Prostate gland (tissue), 2 donors: ENCODE measurements at regions of chr11 and their contacts with region 1.

Region 1: GRCh38 chr11:44565211-44565952 is at the start of gene CD82:
- DNase-seq: peak; percentile 100
- H3K4me3 ChIP-seq: peak within 1 kb of the TSS; percentile 51 to 56
- H3K27ac ChIP-seq: peak within 1 kb of the TSS; percentile 96 to 99
- H3K4me1 ChIP-seq: peaks cover 8% of the 10 kb centered on the region
- H3K27me3 ChIP-seq: no peaks in the 10 kb centered on the region
- CTCF ChIP-seq: peak in 3 of 4 experiments; percentile 17 to 52 (median 45)
- POLR2A ChIP-seq: peak; percentile 97
- total RNA-seq, gene CD82: 35.1 to 54.6 TPM

Region 2: GRCh38 chr11:44592125-44592940 is 27.0 kb after region 1 on chr11:
- intact Hi-C with region 1: loop called (anchors 2 kb)
- DNase-seq: no peak
- H3K4me3 ChIP-seq: no peak overlapping the region
- H3K27ac ChIP-seq: peak overlapping the region in 1 of 2 donors; percentile 54
- H3K4me1 ChIP-seq: peaks cover 3% of the 10 kb centered on the region
- H3K27me3 ChIP-seq: no peaks in the 10 kb centered on the region
- CTCF ChIP-seq: no peak
- POLR2A ChIP-seq: no peak

Region 3: GRCh38 chr11:44899959-44900358 is 334.6 kb after region 1 on chr11:
- intact Hi-C with region 1: loop called (anchors 5 kb)
- DNase-seq: no peak
- H3K4me3 ChIP-seq: no peak overlapping the region
- H3K27ac ChIP-seq: no peak overlapping the region
- H3K4me1 ChIP-seq: no peaks in the 10 kb centered on the region
- H3K27me3 ChIP-seq: no peaks in the 10 kb centered on the region
- CTCF ChIP-seq: no peak
- POLR2A ChIP-seq: no peak